ENCODE measurements at regions of chr5 and their contacts with region 1.

Region 1: GRCh38 chr5:154857530-154858296 is 714 bp upstream of the CNOT8 start:
- DNase-seq: peak; percentile 97
- H3K4me3 ChIP-seq: peak overlapping the region; percentile 94 to 100 (median 95)
- H3K27ac ChIP-seq: peak overlapping the region; percentile 95
- H3K4me1 ChIP-seq: peaks cover 27% of the 10 kb centered on the region
- H3K27me3 ChIP-seq: no peaks in the 10 kb centered on the region
- CTCF ChIP-seq: peak in 1 of 2 donors; percentile 8
- POLR2A ChIP-seq: peak; percentile 82

Region 2: GRCh38 chr5:154038707-154039457 is 818.8 kb before region 1 on chr5 and contains the starts of genes FAM114A2 and MFAP3:
- CTCF ChIA-PET with region 1: no interaction called
- POLR2A ChIA-PET with region 1: no interaction called
- dilution Hi-C with region 1: no loop called
- intact Hi-C with region 1: loop called (anchors 1 kb)
- DNase-seq: peak; percentile 88
- H3K4me3 ChIP-seq: peak within 1 kb of the TSS; percentile 55 to 87 (median 79)
- H3K27ac ChIP-seq: peak within 1 kb of the TSS; percentile 52
- H3K4me1 ChIP-seq: peaks cover 28% of the 10 kb centered on the region
- H3K27me3 ChIP-seq: no peaks in the 10 kb centered on the region
- CTCF ChIP-seq: no peak
- POLR2A ChIP-seq: peak; percentile 71
- total RNA-seq, gene FAM114A2: 26.6 and 31.3 TPM in 2 replicates
- total RNA-seq, gene MFAP3: 31.7 and 35.3 TPM in 2 replicates

Region 3: GRCh38 chr5:154647114-154647760 is 210.5 kb before region 1 on chr5:
- CTCF ChIA-PET with region 1: interaction called, 12 read pairs
- POLR2A ChIA-PET with region 1: no interaction called
- dilution Hi-C with region 1: no loop called
- intact Hi-C with region 1: loop called (anchors 1 kb)
- DNase-seq: peak; percentile 19
- H3K4me3 ChIP-seq: peak overlapping the region; percentile 1 to 28 (median 9)
- H3K27ac ChIP-seq: no peak overlapping the region
- H3K4me1 ChIP-seq: peaks cover 6% of the 10 kb centered on the region
- H3K27me3 ChIP-seq: no peaks in the 10 kb centered on the region
- CTCF ChIP-seq: no peak
- POLR2A ChIP-seq: no peak

Region 4: DNA sequence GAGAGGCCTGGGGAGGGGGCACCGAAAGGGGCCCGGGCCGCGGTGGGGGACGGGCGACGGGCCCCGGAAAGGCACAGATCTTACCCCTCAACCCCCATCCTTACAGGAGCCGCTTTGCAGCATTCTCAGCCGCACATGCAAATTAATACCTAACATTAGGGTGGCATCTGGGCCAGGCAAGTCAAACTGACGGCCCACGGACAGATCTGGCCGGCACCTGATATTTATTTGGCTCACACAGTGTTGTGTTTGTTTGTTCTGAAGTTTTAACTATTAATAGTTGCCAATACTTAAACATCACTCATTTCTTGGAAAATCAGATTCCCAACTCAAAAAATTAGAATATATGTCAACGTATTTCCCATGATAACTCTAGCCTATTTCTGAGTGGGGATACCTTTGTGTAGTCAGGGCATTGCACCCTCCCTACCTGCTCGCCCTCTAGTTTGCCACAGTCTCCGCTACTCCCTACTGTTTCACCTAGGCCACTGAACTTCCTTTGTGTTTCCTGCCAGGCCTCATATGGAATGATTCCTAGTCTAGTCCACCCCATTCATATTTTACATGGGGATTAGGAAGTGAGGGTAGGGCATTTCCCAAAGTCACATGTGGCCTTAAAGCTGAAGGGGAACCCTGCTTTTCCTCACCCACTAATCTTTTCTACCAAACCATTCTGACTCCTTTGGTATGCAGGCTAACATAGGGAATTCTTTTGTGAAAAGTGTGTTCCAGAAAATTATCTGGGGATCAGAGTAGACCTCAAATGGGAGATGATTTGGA is 174.4 kb before region 1 on chr5:
- CTCF ChIA-PET with region 1: no interaction called
- POLR2A ChIA-PET with region 1: no interaction called
- dilution Hi-C with region 1: no loop called
- intact Hi-C with region 1: loop called (anchors 1 kb)
- DNase-seq: no peak
- H3K4me3 ChIP-seq: peak overlapping the region in 1 of 3 experiments; percentile 53
- H3K27ac ChIP-seq: no peak overlapping the region
- H3K4me1 ChIP-seq: peaks cover 8% of the 10 kb centered on the region
- H3K27me3 ChIP-seq: no peaks in the 10 kb centered on the region
- CTCF ChIP-seq: no peak
- POLR2A ChIP-seq: no peak

Region 5: DNA sequence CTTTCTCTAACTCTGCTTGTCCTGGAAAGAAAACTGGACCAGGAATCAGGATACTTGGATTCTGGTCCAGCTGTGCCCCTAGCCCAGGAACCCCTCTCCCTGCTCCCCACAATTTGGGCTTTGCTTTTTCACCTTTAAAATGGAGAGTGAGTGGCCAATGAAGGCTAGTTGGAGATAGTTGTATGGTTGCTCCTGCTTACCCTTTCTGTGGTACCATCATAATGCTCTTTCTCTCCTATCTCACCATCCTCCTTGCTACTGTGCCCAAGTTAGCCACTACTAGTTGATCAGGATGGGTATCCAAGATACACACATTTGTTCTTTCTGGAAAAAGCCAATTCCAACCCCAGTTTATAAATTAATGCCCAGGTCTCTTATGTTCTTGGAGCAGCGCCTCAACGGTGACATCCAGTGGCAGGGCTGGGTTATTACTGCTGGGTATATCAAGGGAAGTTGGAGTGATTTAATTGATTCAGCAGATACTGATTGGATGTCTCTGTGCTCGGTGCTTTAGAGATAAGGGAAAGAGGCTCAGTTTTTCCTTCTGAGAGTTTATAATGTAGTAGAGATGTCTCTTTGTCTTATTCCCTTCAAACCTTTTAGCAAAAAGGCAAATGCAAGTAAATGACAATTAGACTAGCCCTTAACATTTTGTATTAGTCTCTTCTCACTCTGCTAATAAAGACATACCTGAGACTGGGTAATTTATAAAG is 45.9 kb before region 1 on chr5:
- CTCF ChIA-PET with region 1: no interaction called
- POLR2A ChIA-PET with region 1: no interaction called
- dilution Hi-C with region 1: no loop called
- intact Hi-C with region 1: loop called (anchors 2 kb)
- DNase-seq: peak; percentile 77
- H3K4me3 ChIP-seq: no peak overlapping the region
- H3K27ac ChIP-seq: no peak overlapping the region
- H3K4me1 ChIP-seq: no peaks in the 10 kb centered on the region
- H3K27me3 ChIP-seq: no peaks in the 10 kb centered on the region
- CTCF ChIP-seq: peak; percentile 70 to 86
- POLR2A ChIP-seq: no peak

Region 6: GRCh38 chr5:154923441-154924430 is 66.0 kb after region 1 on chr5:
- CTCF ChIA-PET with region 1: no interaction called
- POLR2A ChIA-PET with region 1: no interaction called
- dilution Hi-C with region 1: no loop called
- intact Hi-C with region 1: no loop called
- DNase-seq: no peak
- H3K4me3 ChIP-seq: no peak overlapping the region
- H3K27ac ChIP-seq: no peak overlapping the region
- H3K4me1 ChIP-seq: no peaks in the 10 kb centered on the region
- H3K27me3 ChIP-seq: no peaks in the 10 kb centered on the region
- CTCF ChIP-seq: no peak
- POLR2A ChIP-seq: no peak

Region 7: GRCh38 chr5:154995679-154996078 is 138.0 kb after region 1 on chr5:
- CTCF ChIA-PET with region 1: no interaction called
- POLR2A ChIA-PET with region 1: no interaction called
- dilution Hi-C with region 1: no loop called
- intact Hi-C with region 1: loop called (anchors 1 kb)
- DNase-seq: peak; percentile 39
- H3K4me3 ChIP-seq: no peak overlapping the region
- H3K27ac ChIP-seq: no peak overlapping the region
- H3K4me1 ChIP-seq: peaks cover 15% of the 10 kb centered on the region
- H3K27me3 ChIP-seq: no peaks in the 10 kb centered on the region
- CTCF ChIP-seq: peak; percentile 16 to 36
- POLR2A ChIP-seq: no peak

Measured in endothelial cell of umbilical vein (primary cell).